ENCODE measurements at regions of chr2 and their contacts with region 1.

Region 1: DNA sequence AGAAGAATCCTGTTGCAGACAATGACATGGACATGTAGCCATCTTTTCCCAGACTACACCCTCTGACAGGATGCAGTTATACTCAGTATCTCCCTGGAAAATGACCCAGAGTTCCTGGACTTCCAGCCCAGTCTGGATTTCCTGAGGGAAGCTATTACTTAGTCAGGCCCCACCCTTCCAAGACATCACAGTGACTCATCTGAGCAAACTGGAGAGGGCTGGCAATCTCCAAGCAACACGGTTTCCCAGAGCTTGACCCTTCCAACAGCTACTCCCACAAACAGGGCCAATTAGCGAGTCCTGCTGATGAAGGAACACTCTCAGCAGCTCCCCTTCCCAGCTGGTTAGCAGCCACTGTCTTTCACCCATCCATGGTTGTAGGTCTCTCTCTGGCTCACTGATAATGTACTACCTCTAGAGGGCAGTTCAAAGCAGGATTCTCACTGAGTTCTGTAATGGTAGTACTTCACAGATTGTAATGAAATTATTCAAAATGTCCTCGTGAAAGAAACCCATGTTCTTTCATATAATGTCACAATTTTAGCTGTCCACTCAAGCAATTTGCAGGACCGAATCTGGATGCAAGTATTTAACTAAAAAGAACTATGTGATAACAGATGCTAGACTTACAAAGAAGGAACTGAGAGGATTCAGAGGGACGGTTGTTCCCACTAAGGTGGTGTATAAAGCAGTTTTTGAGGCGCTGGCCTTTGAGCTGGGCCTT is 110.2 kb downstream of the MDH1 start:
- DNase-seq: peak in 3 of 6 donors; percentile 11 to 36 (median 23)
- ATAC-seq: peak; percentile 85 to 99 (median 96)
- H3K4me3 ChIP-seq: no peak overlapping the region
- H3K27ac ChIP-seq: peak overlapping the region in 1 of 4 donors; percentile 12
- H3K4me1 ChIP-seq: no peaks in the 10 kb centered on the region
- H3K27me3 ChIP-seq: no peaks in the 10 kb centered on the region
- CTCF ChIP-seq: peak in 3 of 4 donors; percentile 22 to 39 (median 24)

Region 2: GRCh38 chr2:63827749-63828148 is 128.8 kb after region 1 on chr2:
- intact Hi-C with region 1: no loop called
- DNase-seq: no peak
- ATAC-seq: peak in 3 of 4 donors; percentile 24 to 54 (median 41)
- H3K4me3 ChIP-seq: no peak overlapping the region
- H3K27ac ChIP-seq: no peak overlapping the region
- H3K4me1 ChIP-seq: peaks cover 0 to 4% (median 0%) of the 10 kb centered on the region in 3 donors
- H3K27me3 ChIP-seq: no peaks in the 10 kb centered on the region
- CTCF ChIP-seq: no peak

Region 3: GRCh38 chr2:63888490-63889402 is 189.8 kb after region 1 on chr2:
- intact Hi-C with region 1: loop called in 1 of 3 experiments (anchors 10 kb)
- DNase-seq: peak in 3 of 6 donors; percentile 25 to 60 (median 29)
- ATAC-seq: peak; percentile 74 to 91 (median 88)
- H3K4me3 ChIP-seq: no peak overlapping the region
- H3K27ac ChIP-seq: no peak overlapping the region
- H3K4me1 ChIP-seq: peaks cover 0 to 16% (median 3%) of the 10 kb centered on the region in 3 donors
- H3K27me3 ChIP-seq: no peaks in the 10 kb centered on the region
- CTCF ChIP-seq: peak; percentile 28 to 63 (median 47)

Measured in pancreas (tissue), 10 donors.